GM18951 (cell line): ENCODE measurements at regions of chr1 and their contacts with region 1.

Region 1: DNA sequence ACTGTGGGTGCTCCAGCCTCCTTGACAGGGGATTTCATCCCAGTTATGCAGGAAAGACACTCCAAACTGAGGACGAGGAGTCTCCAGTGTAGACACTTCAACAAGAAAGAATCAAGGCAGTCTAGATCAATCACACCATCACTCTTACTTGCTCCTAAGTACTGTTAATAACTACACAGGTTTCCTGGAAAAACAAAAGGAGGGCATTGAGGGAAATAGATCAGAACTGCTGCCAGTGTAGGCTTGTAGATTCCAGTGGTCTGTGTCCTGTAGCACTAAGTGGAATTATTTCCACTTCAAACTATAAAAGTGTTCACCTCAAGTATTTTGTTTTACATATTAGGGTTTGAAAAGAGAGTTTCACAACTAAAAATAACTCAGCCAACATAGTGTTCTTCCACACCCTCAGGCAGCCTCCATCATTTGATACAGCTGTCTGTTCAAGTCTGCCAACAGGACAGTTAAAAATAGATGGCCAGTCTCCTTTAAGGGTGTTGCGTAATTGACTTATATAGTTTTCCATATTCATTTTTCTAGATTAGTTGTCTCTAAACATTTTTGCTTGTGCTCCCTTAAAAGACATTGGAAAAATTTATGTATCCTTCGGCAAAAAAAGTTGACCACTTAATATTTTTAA is 32.0 kb upstream of the AGL start:
- POLR2A ChIP-seq: no peak

Region 2: DNA sequence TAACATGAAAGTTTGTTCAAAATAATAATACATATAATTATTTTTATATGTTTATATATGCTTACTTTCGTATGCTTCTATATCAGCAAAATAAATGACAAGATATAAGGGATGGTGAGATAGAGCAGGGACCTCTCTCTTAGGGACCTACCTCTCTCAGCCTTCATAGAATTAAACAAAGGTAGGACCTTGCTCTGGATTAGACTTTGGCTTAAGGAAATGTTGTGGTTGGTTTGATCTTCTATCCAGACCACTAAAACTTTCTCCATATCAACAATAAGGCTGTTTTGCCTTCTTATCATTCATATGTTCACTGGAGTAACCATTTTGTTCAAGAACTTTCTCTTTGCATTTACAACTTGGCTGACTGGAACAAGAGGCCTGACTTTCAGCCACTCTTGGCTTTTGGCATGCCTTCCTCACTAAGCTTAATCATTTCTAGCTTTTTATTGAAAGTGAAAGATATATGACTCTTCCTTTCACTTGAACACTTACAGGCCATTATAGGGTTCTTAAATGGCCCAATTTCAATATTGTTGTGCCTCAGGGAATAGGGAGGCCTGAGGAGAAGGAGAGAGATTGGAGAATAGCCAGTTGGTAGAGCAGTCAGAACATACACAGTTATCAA is 66.2 kb before region 1 on chr1:
- in situ Hi-C with region 1: no loop called
- POLR2A ChIP-seq: no peak

Region 3: DNA sequence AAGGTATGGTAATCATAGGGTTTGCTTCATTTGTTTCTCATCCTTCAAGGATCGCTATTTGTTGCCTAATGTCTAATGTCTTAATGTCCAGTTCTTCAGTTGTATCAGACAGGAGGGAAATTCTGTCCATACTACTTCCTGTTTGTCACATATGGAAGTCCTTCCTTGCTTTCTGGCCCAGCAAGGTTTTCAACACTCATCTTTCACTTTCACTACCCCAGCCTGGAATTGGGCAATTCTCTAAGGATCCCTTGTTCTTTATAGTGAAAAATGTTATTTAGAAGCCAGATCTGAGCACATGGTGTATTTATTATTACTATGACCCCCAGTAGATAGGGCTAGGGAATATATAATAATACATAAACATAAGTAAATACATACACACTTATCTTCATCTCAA is 101.0 kb after region 1 on chr1:
- in situ Hi-C with region 1: no loop called
- POLR2A ChIP-seq: no peak

Region 4: DNA sequence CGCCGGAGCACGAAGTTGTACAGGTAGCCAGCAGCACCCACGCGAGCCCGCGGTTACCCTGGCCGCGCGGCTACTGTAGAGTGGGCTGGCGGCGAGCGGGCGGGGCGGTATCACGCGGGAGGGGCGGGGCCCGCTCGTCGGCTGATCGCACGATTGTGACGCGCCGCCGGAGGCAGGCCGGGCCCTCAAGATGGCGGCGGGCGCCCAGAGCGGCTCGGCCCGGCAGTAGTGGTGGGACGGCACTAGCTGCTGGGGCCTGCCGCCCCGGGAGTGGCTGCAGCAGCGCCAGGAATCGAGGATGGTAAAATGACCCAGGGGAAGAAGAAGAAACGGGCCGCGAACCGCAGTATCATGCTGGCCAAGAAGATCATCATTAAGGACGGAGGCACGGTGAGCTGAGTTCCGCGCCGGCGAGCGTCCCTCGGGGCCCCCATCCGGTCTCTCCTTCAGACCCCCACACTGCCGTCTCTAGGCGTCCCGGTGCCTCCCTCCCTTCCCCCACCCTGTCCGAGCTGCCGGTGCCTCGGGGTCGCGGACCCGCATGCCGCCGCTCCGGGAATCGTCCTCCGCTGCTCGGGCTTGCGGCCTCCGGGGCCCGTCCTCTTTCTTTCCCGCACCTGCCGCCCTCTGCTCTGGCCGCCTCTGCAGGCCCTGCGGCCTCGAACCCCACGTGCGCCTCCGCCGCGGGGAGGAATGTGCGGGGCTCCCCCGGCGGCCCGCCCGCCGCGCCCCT is 219.9 kb after region 1 on chr1:
- in situ Hi-C with region 1: loop called (anchors 10 kb)
- POLR2A ChIP-seq: peak; percentile 97

Region 5: GRCh38 chr1:100459358-100460114 is 641.4 kb after region 1 on chr1:
- in situ Hi-C with region 1: loop called (anchors 10 kb)
- POLR2A ChIP-seq: no peak